CD8-positive, alpha-beta T cell (primary cell): ENCODE measurements at regions of chr3 and their contacts with region 1.

Region 1: GRCh38 chr3:9932843-9933560 is 632 bp upstream of the CRELD1 start:
- DNase-seq: peak; percentile 77 to 94 (median 87)
- ATAC-seq: peak; percentile 59
- H3K4me3 ChIP-seq: peak overlapping the region; percentile 85 to 95
- H3K4me3 Mint-ChIP-seq: peak overlapping the region; percentile 95
- H3K27ac ChIP-seq: peak overlapping the region; percentile 90 to 100
- H3K27ac Mint-ChIP-seq: peak overlapping the region; percentile 99
- H3K4me1 ChIP-seq: peaks cover 32% of the 10 kb centered on the region
- H3K4me1 Mint-ChIP-seq: peaks cover 47% of the 10 kb centered on the region
- H3K27me3 ChIP-seq: no peaks in the 10 kb centered on the region
- H3K27me3 Mint-ChIP-seq: no peaks in the 10 kb centered on the region
- CTCF ChIP-seq: peak; percentile 79

Region 2: DNA sequence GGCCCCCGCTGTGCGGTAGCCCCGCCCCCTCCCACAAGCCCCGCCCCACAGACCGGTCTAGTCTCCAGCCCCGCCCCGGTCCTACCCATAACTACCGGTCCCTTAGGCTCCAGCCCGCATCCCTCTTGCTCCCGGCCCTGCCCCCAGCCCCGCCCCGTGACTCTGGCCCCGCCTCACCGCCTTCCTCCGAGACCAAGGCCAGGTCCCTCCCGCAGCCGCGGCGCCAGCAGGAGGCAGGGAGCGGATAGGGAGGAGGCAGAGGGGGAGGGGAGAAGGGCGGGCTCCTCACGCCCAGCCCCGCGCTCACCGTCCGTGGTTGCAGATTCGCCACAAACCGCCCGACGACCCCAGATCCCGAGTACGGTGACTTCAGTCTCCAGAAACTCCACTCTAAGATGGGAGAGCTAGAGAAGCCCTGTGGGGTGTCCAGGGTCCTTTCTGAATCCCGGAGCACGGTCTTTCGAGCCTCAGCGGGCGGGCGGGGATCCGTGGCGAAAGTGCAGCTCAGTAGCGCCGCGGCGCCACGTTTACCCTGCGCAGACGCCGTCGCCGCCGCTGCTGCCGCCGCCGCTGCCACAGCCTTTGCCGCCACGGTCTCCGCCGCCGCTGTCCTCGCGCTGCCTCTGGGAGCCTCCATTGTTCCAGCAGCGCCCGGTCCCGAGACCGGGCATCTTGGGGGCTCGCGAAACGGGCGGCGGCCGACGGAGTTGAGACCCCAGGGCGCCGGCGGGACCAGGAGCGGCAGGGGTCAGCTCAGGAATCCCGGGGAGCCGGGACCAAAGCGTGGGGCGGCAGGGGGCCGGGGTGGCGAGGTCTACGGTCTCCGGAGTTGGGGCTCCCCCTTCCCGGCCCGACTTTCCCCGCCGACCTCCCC is 201.6 kb before region 1 on chr3 and contains the start of gene BRPF1:
- CTCF ChIA-PET with region 1: interaction called, 9 read pairs
- POLR2A ChIA-PET with region 1: no interaction called
- intact Hi-C with region 1: loop called (anchors 1 kb)
- DNase-seq: peak; percentile 98 to 100 (median 99)
- ATAC-seq: peak; percentile 94
- H3K4me3 ChIP-seq: peak within 1 kb of the TSS; percentile 91 to 92
- H3K4me3 Mint-ChIP-seq: peak within 1 kb of the TSS; percentile 91
- H3K27ac ChIP-seq: peak within 1 kb of the TSS; percentile 83 to 97
- H3K27ac Mint-ChIP-seq: peak within 1 kb of the TSS; percentile 93
- H3K4me1 ChIP-seq: peaks cover 48% of the 10 kb centered on the region
- H3K4me1 Mint-ChIP-seq: peaks cover 66% of the 10 kb centered on the region
- H3K27me3 ChIP-seq: no peaks in the 10 kb centered on the region
- H3K27me3 Mint-ChIP-seq: no peaks in the 10 kb centered on the region
- CTCF ChIP-seq: no peak
- total RNA-seq, gene BRPF1: 22.0 to 25.8 TPM

Region 3: DNA sequence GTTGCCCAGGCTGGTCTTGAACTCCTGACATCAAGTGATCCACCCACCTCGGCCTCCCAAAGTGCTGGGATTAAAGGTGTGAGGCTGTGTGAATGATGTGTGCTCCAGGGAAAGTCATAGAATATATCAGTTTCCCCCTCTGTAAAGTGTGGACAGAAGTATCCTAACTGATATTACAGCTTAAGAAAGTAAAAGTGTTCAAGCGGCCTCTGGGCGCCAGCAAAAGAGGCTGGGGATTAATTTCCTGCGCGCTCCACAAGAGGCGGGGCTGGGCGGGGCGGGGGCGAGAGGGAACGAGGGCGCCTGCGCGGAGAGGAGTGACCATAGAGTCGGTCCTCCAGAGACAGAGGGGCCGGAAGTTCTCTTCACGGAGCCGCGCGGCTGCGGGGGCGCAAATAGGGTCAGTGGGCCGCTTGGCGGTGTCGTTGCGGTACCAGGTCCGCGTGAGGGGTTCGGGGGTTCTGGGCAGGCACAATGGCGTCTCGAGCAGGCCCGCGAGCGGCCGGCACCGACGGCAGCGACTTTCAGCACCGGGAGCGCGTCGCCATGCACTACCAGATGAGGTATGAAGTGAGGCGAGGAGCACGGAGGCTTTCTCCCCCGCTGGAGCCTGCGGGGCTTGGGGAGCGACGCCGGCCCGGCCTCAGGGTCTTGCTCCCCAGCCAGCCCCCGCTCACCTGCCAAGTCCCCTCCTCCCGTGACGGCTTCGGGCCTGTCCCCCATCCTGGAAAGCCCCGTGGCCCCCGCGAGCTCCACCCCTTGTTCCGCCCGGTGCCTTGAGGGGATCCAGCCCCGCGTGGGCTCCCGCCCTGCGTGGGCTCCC is 42.5 kb before region 1 on chr3 and contains the start of gene JAGN1:
- CTCF ChIA-PET with region 1: interaction called, 5 read pairs
- POLR2A ChIA-PET with region 1: interaction called, 33 read pairs
- intact Hi-C with region 1: loop called (anchors 1 kb)
- DNase-seq: peak; percentile 86 to 94 (median 91)
- ATAC-seq: peak; percentile 92
- H3K4me3 ChIP-seq: peak within 1 kb of the TSS; percentile 95 to 96
- H3K4me3 Mint-ChIP-seq: peak within 1 kb of the TSS; percentile 98
- H3K27ac ChIP-seq: peak within 1 kb of the TSS; percentile 99 to 100
- H3K27ac Mint-ChIP-seq: peak within 1 kb of the TSS; percentile 100
- H3K4me1 ChIP-seq: peaks cover 16% of the 10 kb centered on the region
- H3K4me1 Mint-ChIP-seq: peaks cover 40% of the 10 kb centered on the region
- H3K27me3 ChIP-seq: no peaks in the 10 kb centered on the region
- H3K27me3 Mint-ChIP-seq: no peaks in the 10 kb centered on the region
- CTCF ChIP-seq: no peak
- total RNA-seq, gene JAGN1: 13.4 to 14.5 TPM

Region 4: DNA sequence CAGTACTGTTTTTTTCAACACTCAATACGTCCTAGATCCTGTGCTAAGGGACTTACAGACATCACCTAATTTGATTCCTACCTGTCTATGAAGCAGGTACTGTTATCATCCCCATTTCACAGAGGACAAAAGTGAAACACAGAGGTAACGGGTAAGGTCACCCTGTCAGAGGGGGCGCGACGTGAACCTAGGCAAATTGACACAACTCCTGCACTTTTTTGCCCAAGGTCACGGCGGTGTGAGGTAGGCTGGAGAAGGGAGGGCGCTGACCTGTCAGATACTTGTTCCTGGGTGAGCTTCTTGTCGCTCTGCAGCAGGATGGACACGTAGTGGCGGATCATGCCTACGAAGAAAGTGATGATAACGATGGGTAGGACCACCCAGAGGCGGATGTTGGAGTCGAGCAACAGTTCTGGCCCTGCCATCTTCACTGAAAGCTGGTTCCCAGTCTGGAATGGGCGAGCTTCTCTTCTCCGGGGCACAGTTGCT is 53.3 kb after region 1 on chr3:
- CTCF ChIA-PET with region 1: interaction called, 6 read pairs
- POLR2A ChIA-PET with region 1: interaction called, 16 read pairs
- intact Hi-C with region 1: loop called (anchors 1 kb)
- DNase-seq: no peak
- ATAC-seq: peak; percentile 46
- H3K4me3 ChIP-seq: peak overlapping the region; percentile 71 to 83
- H3K4me3 Mint-ChIP-seq: peak overlapping the region; percentile 93
- H3K27ac ChIP-seq: peak overlapping the region; percentile 83 to 93
- H3K27ac Mint-ChIP-seq: peak overlapping the region; percentile 96
- H3K4me1 ChIP-seq: peaks cover 24% of the 10 kb centered on the region
- H3K4me1 Mint-ChIP-seq: peaks cover 39% of the 10 kb centered on the region
- H3K27me3 ChIP-seq: no peaks in the 10 kb centered on the region
- H3K27me3 Mint-ChIP-seq: no peaks in the 10 kb centered on the region
- CTCF ChIP-seq: no peak

Region 5: GRCh38 chr3:10142707-10143566 is 209.9 kb after region 1 on chr3:
- CTCF ChIA-PET with region 1: no interaction called
- POLR2A ChIA-PET with region 1: interaction called, 7 read pairs
- intact Hi-C with region 1: loop called in 1 of 2 experiments (anchors 2 kb)
- DNase-seq: peak in 3 of 9 experiments; percentile 22 to 51 (median 33)
- ATAC-seq: no peak
- H3K4me3 ChIP-seq: peak overlapping the region; percentile 73 to 74
- H3K4me3 Mint-ChIP-seq: peak overlapping the region; percentile 93
- H3K27ac ChIP-seq: peak overlapping the region in 1 of 2 experiments; percentile 54
- H3K27ac Mint-ChIP-seq: peak overlapping the region; percentile 98
- H3K4me1 ChIP-seq: peaks cover 32% of the 10 kb centered on the region
- H3K4me1 Mint-ChIP-seq: peaks cover 32% of the 10 kb centered on the region
- H3K27me3 ChIP-seq: no peaks in the 10 kb centered on the region
- H3K27me3 Mint-ChIP-seq: no peaks in the 10 kb centered on the region
- CTCF ChIP-seq: no peak

Region 6: GRCh38 chr3:10322352-10322710 is 389.3 kb after region 1 on chr3:
- CTCF ChIA-PET with region 1: no interaction called
- POLR2A ChIA-PET with region 1: interaction called, 8 read pairs
- intact Hi-C with region 1: loop called in 1 of 2 experiments (anchors 2 kb)
- DNase-seq: peak in 2 of 9 experiments; percentile 37 to 47
- ATAC-seq: no peak
- H3K4me3 ChIP-seq: no peak overlapping the region
- H3K4me3 Mint-ChIP-seq: peak overlapping the region; percentile 18
- H3K27ac ChIP-seq: no peak overlapping the region
- H3K27ac Mint-ChIP-seq: no peak overlapping the region
- H3K4me1 ChIP-seq: peaks cover 16% of the 10 kb centered on the region
- H3K4me1 Mint-ChIP-seq: peaks cover 29% of the 10 kb centered on the region
- H3K27me3 ChIP-seq: no peaks in the 10 kb centered on the region
- H3K27me3 Mint-ChIP-seq: peaks cover 3% of the 10 kb centered on the region
- CTCF ChIP-seq: peak; percentile 31